Panc1 (cell line): ENCODE measurements at regions of chr17 and their contacts with region 1.

Region 1: GRCh38 chr17:63946440-63947367 is 14.6 kb upstream of the CD79B start:
- DNase-seq: peak; percentile 22
- ATAC-seq: peak; percentile 72
- H3K4me3 ChIP-seq: no peak overlapping the region
- H3K27ac ChIP-seq: no peak overlapping the region
- H3K4me1 ChIP-seq: no peaks in the 10 kb centered on the region
- H3K27me3 ChIP-seq: no peaks in the 10 kb centered on the region
- CTCF ChIP-seq: peak; percentile 82

Region 2: DNA sequence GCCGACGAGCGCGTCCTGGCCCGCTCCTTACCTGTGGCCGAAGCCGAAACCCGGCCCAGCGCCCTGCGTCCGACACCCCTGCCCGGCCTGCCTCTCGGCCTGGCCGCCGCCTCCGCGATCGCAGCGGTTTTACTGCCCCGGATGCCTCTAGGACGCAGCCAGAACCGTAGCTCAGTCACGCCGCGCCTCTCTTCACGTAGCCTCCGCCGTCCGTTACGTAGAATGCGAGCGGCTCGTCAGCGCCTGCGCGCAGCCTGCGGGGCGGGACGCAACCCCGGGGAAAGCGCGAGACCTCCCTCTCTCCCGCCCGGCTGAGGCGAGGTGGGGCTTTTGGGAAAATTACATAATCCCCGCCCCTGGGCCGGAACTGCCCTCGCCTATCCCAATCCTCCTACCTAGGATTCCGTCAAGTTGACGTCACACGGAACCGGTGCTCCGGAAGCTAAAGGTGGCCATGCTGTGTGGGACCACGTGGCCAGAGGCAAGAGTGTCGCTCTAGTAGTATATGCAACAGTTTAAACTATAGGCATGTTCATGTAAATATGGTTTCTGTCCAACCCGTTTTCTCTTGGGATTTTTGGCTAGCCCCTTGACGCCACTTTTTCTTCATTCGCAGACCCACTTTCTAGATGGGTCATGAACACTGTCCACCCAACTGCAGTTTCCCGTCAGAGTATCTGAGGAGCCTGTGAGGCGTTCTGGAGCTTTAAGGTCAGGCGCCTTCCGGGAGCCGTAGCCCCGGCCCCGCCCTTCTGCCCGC is 173.1 kb before region 1 on chr17 and contains the start of gene CCDC47:
- CTCF ChIA-PET with region 1: no interaction called
- POLR2A ChIA-PET with region 1: no interaction called
- in situ Hi-C with region 1: no loop called
- intact Hi-C with region 1: no loop called
- DNase-seq: peak; percentile 90
- ATAC-seq: peak; percentile 97
- H3K4me3 ChIP-seq: peak within 1 kb of the TSS; percentile 96 to 97
- H3K27ac ChIP-seq: peak within 1 kb of the TSS; percentile 98
- H3K4me1 ChIP-seq: peaks cover 6% of the 10 kb centered on the region
- H3K27me3 ChIP-seq: no peaks in the 10 kb centered on the region
- CTCF ChIP-seq: no peak
- total RNA-seq, gene CCDC47: 64.8 TPM

Region 3: DNA sequence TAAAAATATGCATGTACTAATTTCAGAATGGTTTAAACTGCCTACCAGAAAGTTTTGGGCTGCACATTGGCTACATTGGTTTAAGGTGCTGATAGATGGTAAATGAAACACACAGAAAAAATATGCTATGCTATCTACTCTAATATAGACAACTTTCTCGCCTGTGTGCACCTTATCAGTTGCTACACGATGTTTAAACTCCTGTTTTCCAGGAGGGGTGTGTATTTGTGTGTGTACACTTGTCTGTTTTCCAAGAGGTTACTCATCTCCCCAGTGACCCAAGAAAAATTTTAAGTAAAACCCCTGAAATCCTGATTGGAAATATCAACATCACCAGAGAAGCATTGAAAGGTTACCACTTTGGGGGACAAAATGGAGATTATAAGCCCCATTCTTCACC is 141.1 kb before region 1 on chr17:
- CTCF ChIA-PET with region 1: no interaction called
- POLR2A ChIA-PET with region 1: no interaction called
- in situ Hi-C with region 1: no loop called
- intact Hi-C with region 1: no loop called
- DNase-seq: no peak
- ATAC-seq: no peak
- H3K4me3 ChIP-seq: no peak overlapping the region
- H3K27ac ChIP-seq: no peak overlapping the region
- H3K4me1 ChIP-seq: no peaks in the 10 kb centered on the region
- H3K27me3 ChIP-seq: no peaks in the 10 kb centered on the region
- CTCF ChIP-seq: no peak

Region 4: GRCh38 chr17:63961355-63962212 is 14.9 kb after region 1 on chr17:
- CTCF ChIA-PET with region 1: interaction called, 12 read pairs
- POLR2A ChIA-PET with region 1: no interaction called
- in situ Hi-C with region 1: no loop called
- intact Hi-C with region 1: no loop called
- DNase-seq: no peak
- ATAC-seq: peak; percentile 64
- H3K4me3 ChIP-seq: no peak overlapping the region
- H3K27ac ChIP-seq: no peak overlapping the region
- H3K4me1 ChIP-seq: no peaks in the 10 kb centered on the region
- H3K27me3 ChIP-seq: no peaks in the 10 kb centered on the region
- CTCF ChIP-seq: no peak

Region 5: GRCh38 chr17:64479650-64480049 is 532.9 kb after region 1 on chr17:
- CTCF ChIA-PET with region 1: no interaction called
- POLR2A ChIA-PET with region 1: no interaction called
- in situ Hi-C with region 1: no loop called
- intact Hi-C with region 1: no loop called
- DNase-seq: no peak
- ATAC-seq: no peak
- H3K4me3 ChIP-seq: no peak overlapping the region
- H3K27ac ChIP-seq: no peak overlapping the region
- H3K4me1 ChIP-seq: no peaks in the 10 kb centered on the region
- H3K27me3 ChIP-seq: no peaks in the 10 kb centered on the region
- CTCF ChIP-seq: no peak